Endothelial cell of umbilical vein (primary cell): ENCODE measurements at regions of chr1 and their contacts with region 1.

Region 1: DNA sequence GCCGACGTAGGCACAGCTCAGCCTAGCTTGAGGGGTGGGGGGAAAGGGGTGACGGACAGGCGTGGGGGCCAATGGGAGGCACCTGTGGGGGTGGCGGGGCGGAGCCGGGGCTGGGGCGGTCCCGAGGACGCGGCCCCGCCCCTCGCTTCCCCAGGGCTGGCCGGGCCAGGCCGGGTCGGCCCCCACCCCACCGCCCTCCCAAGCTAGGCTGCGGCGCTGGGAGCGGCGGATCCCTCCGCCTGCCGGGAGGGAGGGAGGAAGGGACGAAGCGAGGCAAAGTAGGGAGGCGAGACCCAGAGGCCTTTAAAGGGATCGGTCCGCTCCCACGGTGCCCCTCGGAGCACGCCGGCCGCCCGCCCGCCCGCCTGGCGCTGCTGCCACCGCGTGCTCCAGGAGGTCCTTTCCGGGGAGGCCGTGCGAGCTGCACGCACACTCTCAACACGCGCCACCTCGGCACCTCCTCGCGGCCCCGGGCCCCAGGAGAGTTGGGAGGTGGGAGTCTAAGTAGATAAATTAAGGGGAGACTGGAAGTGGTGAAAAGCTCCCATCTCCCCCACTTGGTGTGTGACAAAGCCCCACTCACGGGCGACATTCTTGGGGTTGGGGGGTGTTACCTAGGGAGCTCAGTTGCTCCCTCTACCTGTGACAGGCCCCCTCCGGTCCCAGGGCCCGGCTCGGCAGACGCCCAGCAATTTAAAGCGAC is 373 bp upstream of the MEF2D start:
- DNase-seq: peak; percentile 94
- H3K4me3 ChIP-seq: peak overlapping the region; percentile 76 to 95 (median 88)
- H3K27ac ChIP-seq: peak overlapping the region; percentile 100
- H3K4me1 ChIP-seq: peaks cover 63% of the 10 kb centered on the region
- H3K27me3 ChIP-seq: no peaks in the 10 kb centered on the region
- CTCF ChIP-seq: peak; percentile 48 to 49
- POLR2A ChIP-seq: peak; percentile 70

Region 2: DNA sequence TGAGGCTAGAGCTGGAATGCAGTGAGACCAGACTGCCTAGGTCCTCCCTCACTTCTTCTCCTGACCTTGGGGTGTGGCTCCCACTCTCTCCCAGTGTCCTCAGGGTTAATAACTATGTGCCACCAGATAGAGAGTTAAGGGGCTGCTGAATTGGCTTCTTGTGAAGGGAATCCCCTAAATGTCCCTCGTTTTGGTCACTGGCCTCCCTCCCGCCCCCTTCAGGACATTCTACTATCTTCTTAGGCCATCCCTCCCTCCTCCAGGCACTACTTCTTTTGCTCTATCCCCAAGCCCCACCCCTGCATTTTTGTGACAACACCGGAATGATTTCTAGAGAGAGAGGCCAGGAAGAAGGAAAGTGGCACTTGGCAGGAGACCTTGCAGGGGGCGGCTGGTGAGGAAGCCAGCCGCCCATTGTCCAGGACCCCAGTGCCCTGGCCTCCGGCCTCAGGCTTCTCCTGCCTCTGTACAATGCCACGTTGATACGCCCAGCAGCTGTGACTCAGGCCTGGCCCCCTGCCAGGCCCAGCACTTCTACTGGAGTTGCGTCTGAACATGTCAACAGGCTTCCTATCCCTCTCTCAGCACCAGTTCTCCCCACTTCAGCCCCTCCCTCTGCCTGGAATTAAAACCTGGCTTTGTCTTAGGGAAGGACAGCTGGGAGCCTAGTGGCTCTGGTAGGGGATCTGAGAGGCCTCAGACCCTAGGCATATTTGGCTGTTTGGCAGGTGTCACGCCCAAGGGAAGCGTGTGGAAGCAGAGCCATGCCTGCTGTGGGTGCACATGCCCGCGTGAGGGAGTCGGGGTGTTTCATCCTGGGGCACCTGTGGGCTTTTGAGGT is 377.4 kb before region 1 on chr1:
- CTCF ChIA-PET with region 1: no interaction called
- POLR2A ChIA-PET with region 1: no interaction called
- dilution Hi-C with region 1: no loop called
- intact Hi-C with region 1: loop called (anchors 5 kb)
- DNase-seq: peak; percentile 99
- H3K4me3 ChIP-seq: peak overlapping the region in 1 of 3 experiments; percentile 39
- H3K27ac ChIP-seq: peak overlapping the region; percentile 97
- H3K4me1 ChIP-seq: peaks cover 87% of the 10 kb centered on the region
- H3K27me3 ChIP-seq: no peaks in the 10 kb centered on the region
- CTCF ChIP-seq: peak in 1 of 2 donors; percentile 22
- POLR2A ChIP-seq: peak; percentile 21

Region 3: DNA sequence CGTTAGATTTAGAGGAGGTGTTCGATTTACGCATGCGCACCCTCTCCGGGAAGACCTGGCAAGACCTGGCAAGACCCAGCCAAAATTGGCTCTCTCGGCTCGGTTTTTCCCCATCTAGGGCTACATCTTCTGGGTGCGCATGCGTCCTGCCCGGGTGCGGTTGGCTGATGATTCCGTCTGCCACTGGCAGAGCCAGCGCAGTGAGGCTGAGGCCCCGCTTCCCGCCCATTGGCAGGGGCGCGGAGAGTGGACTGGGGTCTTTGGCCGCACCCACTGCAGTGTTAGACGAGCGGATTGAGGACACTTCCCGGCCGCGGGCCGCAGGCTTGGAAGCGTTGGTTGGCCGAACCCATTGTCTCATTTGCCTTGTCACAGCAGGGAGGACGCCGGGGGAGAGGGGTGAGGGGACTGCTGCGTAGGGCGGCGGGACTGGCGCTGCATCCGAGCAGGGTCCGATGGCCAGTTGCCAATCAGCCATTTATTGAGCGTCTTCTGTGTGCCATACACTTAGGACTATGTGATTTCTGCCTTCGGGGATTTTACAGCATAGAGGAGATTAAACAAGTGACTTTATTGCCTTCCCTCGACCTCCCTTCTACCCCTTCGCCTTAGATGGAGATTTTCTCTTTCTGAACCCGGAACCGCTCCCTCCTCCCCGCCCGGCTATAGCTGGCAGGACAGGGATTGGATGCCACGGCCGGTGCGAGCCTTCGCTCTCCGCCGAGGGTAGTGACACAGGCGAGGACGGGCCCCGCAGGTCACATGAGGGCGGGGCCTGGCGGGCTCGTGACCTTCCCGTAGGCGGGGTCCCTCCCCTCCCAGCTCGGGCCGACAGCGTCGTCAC is 44.1 kb before region 1 on chr1:
- CTCF ChIA-PET with region 1: interaction called, 10 read pairs
- POLR2A ChIA-PET with region 1: interaction called, 4 read pairs
- dilution Hi-C with region 1: no loop called
- intact Hi-C with region 1: loop called (anchors 1 kb)
- DNase-seq: peak; percentile 95
- H3K4me3 ChIP-seq: peak overlapping the region; percentile 11 to 73 (median 31)
- H3K27ac ChIP-seq: peak overlapping the region; percentile 80
- H3K4me1 ChIP-seq: peaks cover 11% of the 10 kb centered on the region
- H3K27me3 ChIP-seq: peaks cover 6 to 10% of the 10 kb centered on the region in 2 experiments
- CTCF ChIP-seq: no peak
- POLR2A ChIP-seq: peak; percentile 80

Region 4: GRCh38 chr1:156571949-156572662 is 71.2 kb after region 1 on chr1 and contains the start of gene IQGAP3:
- CTCF ChIA-PET with region 1: interaction called, 3 read pairs
- POLR2A ChIA-PET with region 1: interaction called, 3 read pairs
- dilution Hi-C with region 1: no loop called
- intact Hi-C with region 1: loop called (anchors 1 kb)
- DNase-seq: peak; percentile 73
- H3K4me3 ChIP-seq: peak within 1 kb of the TSS; percentile 66 to 71 (median 68)
- H3K27ac ChIP-seq: peak within 1 kb of the TSS; percentile 61
- H3K4me1 ChIP-seq: peaks cover 13% of the 10 kb centered on the region
- H3K27me3 ChIP-seq: peaks cover 3 to 6% of the 10 kb centered on the region in 2 experiments
- CTCF ChIP-seq: no peak
- POLR2A ChIP-seq: no peak
- total RNA-seq, gene IQGAP3: 48.6 and 60.7 TPM in 2 replicates

Region 5: GRCh38 chr1:156659994-156660751 is 159.2 kb after region 1 on chr1:
- CTCF ChIA-PET with region 1: no interaction called
- POLR2A ChIA-PET with region 1: no interaction called
- dilution Hi-C with region 1: no loop called
- intact Hi-C with region 1: loop called (anchors 2 kb)
- DNase-seq: peak; percentile 96
- H3K4me3 ChIP-seq: peak overlapping the region in 1 of 3 experiments; percentile 59
- H3K27ac ChIP-seq: peak overlapping the region; percentile 85
- H3K4me1 ChIP-seq: peaks cover 67% of the 10 kb centered on the region
- H3K27me3 ChIP-seq: peaks cover 3 to 9% of the 10 kb centered on the region in 2 experiments
- CTCF ChIP-seq: peak; percentile 100
- POLR2A ChIP-seq: peak; percentile 83